ENCODE measurements at regions of chrX and their contacts with region 1.

Region 1: GRCh38 chrX:137565921-137566745 is at the start of gene ZIC3:
- DNase-seq: no peak
- ATAC-seq: no peak
- H3K4me3 Mint-ChIP-seq: no peak within 1 kb of the TSS
- H3K27ac Mint-ChIP-seq: no peak within 1 kb of the TSS
- H3K4me1 Mint-ChIP-seq: peaks cover 11% of the 10 kb centered on the region
- H3K27me3 Mint-ChIP-seq: peaks cover 24% of the 10 kb centered on the region
- CTCF ChIP-seq: no peak
- total RNA-seq, gene ZIC3: not detected in 2 replicates

Region 2: GRCh38 chrX:137427806-137428205 is 138.3 kb before region 1 on chrX:
- CTCF ChIA-PET with region 1: no interaction called
- POLR2A ChIA-PET with region 1: no interaction called
- intact Hi-C with region 1: loop called (anchors 5 kb)
- DNase-seq: no peak
- ATAC-seq: no peak
- H3K4me3 Mint-ChIP-seq: peak overlapping the region; percentile 64
- H3K27ac Mint-ChIP-seq: no peak overlapping the region
- H3K4me1 Mint-ChIP-seq: peaks cover 12% of the 10 kb centered on the region
- H3K27me3 Mint-ChIP-seq: peaks cover 27% of the 10 kb centered on the region
- CTCF ChIP-seq: no peak